MCF 10A (cell line): ENCODE measurements at regions of chr6 and their contacts with region 1.

Region 1: DNA sequence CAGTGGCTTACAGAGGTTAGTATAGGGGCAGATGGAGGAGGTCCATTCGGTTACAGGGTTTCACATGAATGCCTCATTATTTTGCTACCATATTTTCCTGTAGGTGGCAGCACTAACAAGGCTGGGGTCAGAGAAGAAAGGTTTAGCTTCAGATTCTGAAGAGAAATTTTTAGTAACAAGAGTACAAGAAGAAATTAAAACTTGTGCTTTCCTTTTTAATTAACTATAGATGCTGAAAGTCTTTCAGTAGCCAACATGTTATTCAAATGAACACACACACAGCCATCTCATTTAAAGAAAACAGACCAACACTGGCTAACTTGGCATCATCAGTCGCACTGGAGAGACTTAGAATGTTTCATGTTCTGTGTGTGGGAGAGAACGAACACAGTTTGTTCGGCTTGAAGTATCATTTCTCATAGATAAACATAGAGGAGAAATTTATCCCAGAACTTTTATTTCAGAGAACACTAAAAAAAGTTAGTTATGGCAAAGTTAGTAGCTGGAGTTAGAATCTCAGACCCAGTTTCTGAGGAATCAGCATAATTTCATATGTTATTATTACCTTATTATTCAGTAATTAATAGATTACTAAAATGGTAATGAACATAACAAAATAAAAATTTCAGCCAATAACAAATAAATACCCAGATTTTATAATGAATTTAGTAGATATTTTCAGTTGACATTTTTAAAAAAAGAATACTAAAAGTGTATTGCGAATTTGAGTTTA is 314.0 kb upstream of the RSPO3 start:
- DNase-seq: peak; percentile 62
- H3K4me3 Mint-ChIP-seq: no peak overlapping the region
- H3K27ac Mint-ChIP-seq: no peak overlapping the region
- H3K4me1 Mint-ChIP-seq: no peaks in the 10 kb centered on the region
- H3K27me3 Mint-ChIP-seq: peaks cover 81% of the 10 kb centered on the region
- CTCF ChIP-seq: peak; percentile 73

Region 2: GRCh38 chr6:126721581-126722145 is 82.8 kb before region 1 on chr6:
- CTCF ChIA-PET with region 1: no interaction called
- POLR2A ChIA-PET with region 1: no interaction called
- intact Hi-C with region 1: no loop called
- DNase-seq: peak; percentile 31
- H3K4me3 Mint-ChIP-seq: no peak overlapping the region
- H3K27ac Mint-ChIP-seq: peak overlapping the region; percentile 66
- H3K4me1 Mint-ChIP-seq: peaks cover 13% of the 10 kb centered on the region
- H3K27me3 Mint-ChIP-seq: no peaks in the 10 kb centered on the region
- CTCF ChIP-seq: no peak

Region 3: GRCh38 chr6:126821706-126822105 is 17.2 kb after region 1 on chr6:
- CTCF ChIA-PET with region 1: interaction called, 12 read pairs
- POLR2A ChIA-PET with region 1: no interaction called
- intact Hi-C with region 1: no loop called
- DNase-seq: no peak
- H3K4me3 Mint-ChIP-seq: no peak overlapping the region
- H3K27ac Mint-ChIP-seq: no peak overlapping the region
- H3K4me1 Mint-ChIP-seq: no peaks in the 10 kb centered on the region
- H3K27me3 Mint-ChIP-seq: peaks cover 74% of the 10 kb centered on the region
- CTCF ChIP-seq: no peak

Region 4: GRCh38 chr6:126955621-126956020 is 151.1 kb after region 1 on chr6:
- CTCF ChIA-PET with region 1: no interaction called
- POLR2A ChIA-PET with region 1: no interaction called
- intact Hi-C with region 1: no loop called
- DNase-seq: peak; percentile 22
- H3K4me3 Mint-ChIP-seq: no peak overlapping the region
- H3K27ac Mint-ChIP-seq: no peak overlapping the region
- H3K4me1 Mint-ChIP-seq: no peaks in the 10 kb centered on the region
- H3K27me3 Mint-ChIP-seq: peaks cover 67% of the 10 kb centered on the region
- CTCF ChIP-seq: no peak

Region 5: DNA sequence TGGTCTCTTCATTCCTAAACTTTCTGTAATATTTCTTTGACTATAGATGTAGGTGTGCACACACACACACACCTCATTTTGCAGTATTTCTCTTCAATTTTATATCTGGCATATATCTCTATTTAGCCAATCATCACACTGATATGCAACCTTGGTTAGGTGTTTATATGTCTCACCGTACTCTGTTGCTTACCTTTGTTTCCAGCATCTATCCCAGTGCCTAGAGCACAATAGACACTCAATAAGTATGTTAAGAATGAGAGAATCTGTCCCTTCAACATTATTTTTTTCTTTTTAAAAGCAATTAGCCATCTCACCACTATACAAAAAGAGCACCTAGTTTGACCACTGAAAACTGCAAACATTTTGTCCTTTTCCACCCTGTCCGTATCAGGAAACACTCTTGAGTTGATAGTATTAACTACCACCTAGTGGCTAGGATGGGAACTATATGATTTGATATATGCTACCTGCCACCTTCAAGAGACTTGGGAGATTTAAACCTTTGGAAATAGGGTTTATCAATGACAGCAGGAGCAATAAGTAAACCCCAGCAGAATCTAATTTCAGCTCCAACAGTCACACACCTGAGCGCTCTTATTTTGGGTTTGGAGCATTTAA is 265.3 kb after region 1 on chr6:
- CTCF ChIA-PET with region 1: interaction called, 5 read pairs
- POLR2A ChIA-PET with region 1: no interaction called
- intact Hi-C with region 1: loop called (anchors 1 kb)
- DNase-seq: peak; percentile 29
- H3K4me3 Mint-ChIP-seq: no peak overlapping the region
- H3K27ac Mint-ChIP-seq: no peak overlapping the region
- H3K4me1 Mint-ChIP-seq: no peaks in the 10 kb centered on the region
- H3K27me3 Mint-ChIP-seq: peaks cover 21% of the 10 kb centered on the region
- CTCF ChIP-seq: peak; percentile 48

Region 6: DNA sequence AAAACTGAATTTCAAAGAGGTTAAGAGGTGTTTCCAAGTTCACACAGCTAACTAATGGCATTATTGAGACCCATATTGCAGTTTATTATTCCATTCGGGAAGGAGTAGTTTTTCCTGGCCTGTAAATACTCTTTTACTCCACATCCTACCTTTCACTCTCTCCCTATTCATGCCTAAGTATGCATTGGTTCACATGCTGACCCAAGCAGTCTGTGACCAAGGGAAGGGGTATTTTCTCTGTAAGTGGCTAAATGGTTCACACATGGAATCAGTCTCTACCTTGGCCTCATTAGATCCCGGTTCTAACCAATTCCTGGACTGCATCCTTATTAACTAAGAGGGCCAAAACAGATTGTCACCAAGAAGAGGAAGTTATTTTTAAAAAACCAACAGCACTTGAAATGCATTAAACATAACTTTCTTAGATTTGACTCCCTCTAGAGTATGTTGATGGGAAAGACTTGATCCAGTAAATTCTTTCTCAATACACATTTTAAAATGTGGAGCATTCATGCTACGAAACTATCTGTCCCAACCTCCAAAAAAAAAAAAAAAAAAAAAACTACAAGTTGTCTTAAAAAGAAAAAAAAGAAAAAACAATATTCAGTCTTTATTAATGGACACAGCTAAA is 296.1 kb after region 1 on chr6:
- CTCF ChIA-PET with region 1: interaction called, 6 read pairs
- POLR2A ChIA-PET with region 1: no interaction called
- intact Hi-C with region 1: loop called (anchors 1 kb)
- DNase-seq: no peak
- H3K4me3 Mint-ChIP-seq: no peak overlapping the region
- H3K27ac Mint-ChIP-seq: no peak overlapping the region
- H3K4me1 Mint-ChIP-seq: no peaks in the 10 kb centered on the region
- H3K27me3 Mint-ChIP-seq: peaks cover 72% of the 10 kb centered on the region
- CTCF ChIP-seq: peak; percentile 9

Region 7: DNA sequence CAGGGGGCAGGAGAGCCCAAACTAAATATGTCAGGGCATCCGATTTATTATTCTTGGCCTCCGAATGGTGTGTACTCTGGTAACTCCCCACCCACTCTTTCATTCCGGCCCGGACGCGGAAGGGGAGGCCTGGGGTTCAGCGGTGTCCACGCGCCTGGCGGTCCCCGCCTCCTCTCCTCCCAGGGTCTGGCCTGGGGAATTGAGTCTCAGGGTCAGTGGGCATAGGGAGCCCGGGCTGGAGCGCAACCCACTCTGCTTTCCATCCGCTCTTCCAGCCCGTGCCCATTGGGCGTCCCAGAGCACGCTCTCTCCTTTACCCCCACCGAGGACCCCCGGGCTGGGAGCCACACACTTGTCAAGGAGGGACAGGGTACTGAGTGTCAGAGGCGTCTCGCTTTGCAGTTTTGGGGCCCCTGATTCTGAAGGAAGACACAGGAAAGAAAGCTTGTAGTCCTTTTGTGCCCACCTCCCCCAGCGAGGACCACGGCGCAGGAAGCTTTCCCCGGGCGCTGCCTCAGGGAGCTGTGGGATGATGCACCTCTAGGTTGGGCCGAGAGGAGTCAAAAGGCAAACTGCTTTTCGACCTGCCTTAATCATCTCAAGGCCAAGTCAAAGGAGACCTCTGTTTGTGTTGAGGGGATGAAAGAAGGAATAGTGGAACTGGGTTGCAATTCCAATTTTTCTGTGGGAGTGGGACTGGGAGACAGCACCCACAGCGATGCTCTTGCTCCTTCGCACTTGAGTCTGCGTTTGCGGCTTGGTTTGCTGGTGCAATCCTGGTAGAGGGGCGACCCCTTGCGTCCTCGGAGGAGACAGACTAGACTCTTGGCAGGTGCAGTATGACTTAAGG is 316.5 kb after region 1 on chr6:
- CTCF ChIA-PET with region 1: interaction called, 22 read pairs
- POLR2A ChIA-PET with region 1: no interaction called
- intact Hi-C with region 1: loop called (anchors 1 kb)
- DNase-seq: peak; percentile 68
- H3K4me3 Mint-ChIP-seq: no peak overlapping the region
- H3K27ac Mint-ChIP-seq: no peak overlapping the region
- H3K4me1 Mint-ChIP-seq: peaks cover 4% of the 10 kb centered on the region
- H3K27me3 Mint-ChIP-seq: peaks cover 99% of the 10 kb centered on the region
- CTCF ChIP-seq: peak; percentile 84

Region 8: DNA sequence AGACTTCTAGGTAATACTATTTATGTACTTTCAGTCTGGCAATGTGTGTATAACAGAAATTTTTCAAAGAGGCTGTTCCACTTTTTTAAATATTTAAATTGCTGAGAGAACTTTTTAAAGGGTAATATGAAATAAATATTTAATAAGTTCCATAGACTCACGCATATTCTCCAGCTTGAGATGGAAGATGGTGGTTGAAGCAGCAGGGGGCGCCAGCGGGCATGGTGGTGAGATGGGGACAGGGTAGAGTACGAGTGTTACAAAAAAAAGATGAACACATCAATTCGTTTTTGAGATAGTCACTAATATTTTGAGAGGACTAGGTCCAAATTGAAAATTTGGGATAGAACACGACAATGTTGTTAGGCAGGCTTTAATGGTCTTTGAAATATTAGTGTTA is 382.4 kb after region 1 on chr6:
- CTCF ChIA-PET with region 1: interaction called, 25 read pairs
- POLR2A ChIA-PET with region 1: no interaction called
- intact Hi-C with region 1: loop called (anchors 1 kb)
- DNase-seq: peak; percentile 53
- H3K4me3 Mint-ChIP-seq: no peak overlapping the region
- H3K27ac Mint-ChIP-seq: no peak overlapping the region
- H3K4me1 Mint-ChIP-seq: no peaks in the 10 kb centered on the region
- H3K27me3 Mint-ChIP-seq: peaks cover 55% of the 10 kb centered on the region
- CTCF ChIP-seq: peak; percentile 30